Activated CD4-positive, alpha-beta T cell treated with anti-CD3 and anti-CD28 coated beads, Interleukin-2, amount 10 ng/mL, durations not matched to agents 7 days and 5 days (primary cell): ENCODE measurements at regions of chr5 and their contacts with region 1.

Region 1: GRCh38 chr5:55467862-55468551 is 66.8 kb downstream of the PLPP1 start:
- DNase-seq: no peak
- H3K4me3 Mint-ChIP-seq: no peak overlapping the region
- H3K27ac Mint-ChIP-seq: no peak overlapping the region
- H3K4me1 Mint-ChIP-seq: peaks cover 2% of the 10 kb centered on the region
- H3K27me3 Mint-ChIP-seq: no peaks in the 10 kb centered on the region

Region 2: GRCh38 chr5:55456216-55456895 is 11.7 kb before region 1 on chr5:
- CTCF ChIA-PET with region 1: no interaction called
- POLR2A ChIA-PET with region 1: no interaction called
- DNase-seq: no peak
- H3K4me3 Mint-ChIP-seq: no peak overlapping the region
- H3K27ac Mint-ChIP-seq: no peak overlapping the region
- H3K4me1 Mint-ChIP-seq: no peaks in the 10 kb centered on the region
- H3K27me3 Mint-ChIP-seq: no peaks in the 10 kb centered on the region

Region 3: DNA sequence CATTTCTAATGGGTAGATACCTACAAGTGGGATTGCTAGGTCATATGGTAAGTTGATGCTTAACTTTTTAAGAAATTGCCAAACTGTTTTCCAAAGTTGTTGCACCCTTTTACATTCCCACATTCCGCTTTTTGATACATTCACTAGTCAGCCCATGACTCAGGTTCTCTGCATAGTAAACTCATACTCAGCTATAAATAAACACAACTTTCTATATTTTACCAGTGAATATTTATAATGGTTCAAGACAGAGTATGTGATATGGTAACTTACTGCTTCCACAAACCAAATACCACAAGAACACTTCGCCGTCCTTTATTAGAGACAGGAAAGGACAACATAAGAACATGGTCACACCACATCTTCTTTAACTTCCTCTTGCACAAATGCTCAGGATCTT is 12.8 kb after region 1 on chr5:
- CTCF ChIA-PET with region 1: interaction called, 13 read pairs
- POLR2A ChIA-PET with region 1: no interaction called
- DNase-seq: no peak
- H3K4me3 Mint-ChIP-seq: no peak overlapping the region
- H3K27ac Mint-ChIP-seq: no peak overlapping the region
- H3K4me1 Mint-ChIP-seq: peaks cover 22% of the 10 kb centered on the region
- H3K27me3 Mint-ChIP-seq: no peaks in the 10 kb centered on the region

Region 4: GRCh38 chr5:55551358-55551757 is 83.4 kb after region 1 on chr5:
- CTCF ChIA-PET with region 1: no interaction called
- POLR2A ChIA-PET with region 1: no interaction called
- DNase-seq: no peak
- H3K4me3 Mint-ChIP-seq: no peak overlapping the region
- H3K27ac Mint-ChIP-seq: no peak overlapping the region
- H3K4me1 Mint-ChIP-seq: peaks cover 10% of the 10 kb centered on the region
- H3K27me3 Mint-ChIP-seq: peaks cover 17% of the 10 kb centered on the region